ENCODE measurements at regions of chr13 and their contacts with region 1.

Region 1: GRCh38 chr13:57629821-57630235 is 1.7 kb upstream of the PCDH17 start:
- DNase-seq: peak; percentile 97 to 100 (median 98)

Region 2: DNA sequence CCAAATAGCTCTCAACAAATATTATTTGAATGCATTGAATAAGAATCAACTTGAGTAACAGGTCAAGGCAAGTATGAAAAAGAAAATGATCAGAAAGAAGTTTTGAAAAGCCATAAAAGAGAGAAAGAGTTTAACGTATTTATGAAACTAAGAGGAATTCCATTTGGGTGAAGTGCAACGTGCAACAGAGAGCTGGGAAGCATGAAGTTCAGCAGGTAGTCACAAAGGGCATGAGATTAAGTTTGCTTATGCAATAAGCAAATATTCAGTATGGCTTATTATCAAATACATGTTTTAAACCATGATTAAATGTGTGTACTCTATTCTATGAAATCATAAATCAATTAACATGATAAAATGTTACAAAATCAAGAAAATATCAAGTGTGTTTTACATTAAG is 61.0 kb before region 1 on chr13:
- intact Hi-C with region 1: no loop called
- DNase-seq: no peak

Region 3: DNA sequence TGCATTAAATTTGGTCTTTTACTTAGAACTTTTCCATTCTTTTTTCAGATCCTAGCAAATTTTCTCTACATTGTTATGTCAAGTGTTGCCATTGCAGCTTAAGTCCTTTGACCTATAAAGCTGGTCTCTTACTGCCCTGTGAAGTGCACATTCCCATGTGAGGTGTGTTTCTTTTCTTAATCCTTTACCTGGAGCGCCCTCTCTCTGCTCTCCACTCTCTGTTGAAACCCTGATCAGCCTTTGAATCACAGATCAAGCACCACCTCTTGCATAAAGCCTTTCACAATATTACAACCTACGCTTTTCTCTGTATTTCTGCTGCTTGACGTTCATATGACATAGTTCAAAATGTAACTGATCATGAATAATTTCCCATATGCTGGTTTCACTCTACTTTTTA is 86.5 kb after region 1 on chr13:
- intact Hi-C with region 1: loop called (anchors 5 kb)
- DNase-seq: no peak

Region 4: GRCh38 chr13:57740719-57741118 is 110.9 kb after region 1 on chr13:
- intact Hi-C with region 1: no loop called
- DNase-seq: peak; percentile 35 to 90 (median 60)

Region 5: DNA sequence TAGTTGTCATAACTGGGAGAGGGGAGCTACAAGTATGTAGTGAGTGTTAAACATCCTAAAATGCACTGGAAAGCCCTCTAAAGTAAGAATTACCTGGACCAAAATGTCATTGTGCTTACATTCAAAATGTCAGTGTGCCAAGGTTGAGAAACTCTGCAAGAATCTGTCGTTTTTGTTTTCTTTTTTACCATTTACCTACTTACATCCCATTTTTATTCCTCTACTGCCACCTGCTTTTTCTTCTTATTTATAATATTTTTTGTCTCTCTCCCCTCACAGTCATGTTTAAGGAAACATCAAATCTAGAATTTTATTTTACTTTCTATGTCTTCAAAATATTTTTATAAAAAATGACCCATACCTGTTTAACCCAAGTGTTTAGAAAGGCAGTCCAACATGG is 228.1 kb after region 1 on chr13:
- intact Hi-C with region 1: loop called (anchors 1 kb)
- DNase-seq: no peak

Measured in posterior cingulate gyrus (tissue), 11 donors.